Naive thymus-derived CD4-positive, alpha-beta T cell (primary cell): ENCODE measurements at regions of chr22 and their contacts with region 1.

Region 1: GRCh38 chr22:27903805-27904473 is 15.1 kb downstream of the PITPNB start:
- DNase-seq: no peak
- ATAC-seq: peak; percentile 63
- H3K4me3 ChIP-seq: no peak overlapping the region
- H3K4me3 Mint-ChIP-seq: peak overlapping the region in 3 of 10 donors; percentile 14 to 59 (median 17)
- H3K27ac ChIP-seq: no peak overlapping the region
- H3K27ac Mint-ChIP-seq: peak overlapping the region in 6 of 9 donors; percentile 0 to 63 (median 57)
- H3K4me1 ChIP-seq: no peaks in the 10 kb centered on the region
- H3K4me1 Mint-ChIP-seq: peaks cover 23 to 62% (median 45%) of the 10 kb centered on the region in 7 donors
- H3K27me3 ChIP-seq: no peaks in the 10 kb centered on the region
- H3K27me3 Mint-ChIP-seq: no peaks in the 10 kb centered on the region

Region 2: DNA sequence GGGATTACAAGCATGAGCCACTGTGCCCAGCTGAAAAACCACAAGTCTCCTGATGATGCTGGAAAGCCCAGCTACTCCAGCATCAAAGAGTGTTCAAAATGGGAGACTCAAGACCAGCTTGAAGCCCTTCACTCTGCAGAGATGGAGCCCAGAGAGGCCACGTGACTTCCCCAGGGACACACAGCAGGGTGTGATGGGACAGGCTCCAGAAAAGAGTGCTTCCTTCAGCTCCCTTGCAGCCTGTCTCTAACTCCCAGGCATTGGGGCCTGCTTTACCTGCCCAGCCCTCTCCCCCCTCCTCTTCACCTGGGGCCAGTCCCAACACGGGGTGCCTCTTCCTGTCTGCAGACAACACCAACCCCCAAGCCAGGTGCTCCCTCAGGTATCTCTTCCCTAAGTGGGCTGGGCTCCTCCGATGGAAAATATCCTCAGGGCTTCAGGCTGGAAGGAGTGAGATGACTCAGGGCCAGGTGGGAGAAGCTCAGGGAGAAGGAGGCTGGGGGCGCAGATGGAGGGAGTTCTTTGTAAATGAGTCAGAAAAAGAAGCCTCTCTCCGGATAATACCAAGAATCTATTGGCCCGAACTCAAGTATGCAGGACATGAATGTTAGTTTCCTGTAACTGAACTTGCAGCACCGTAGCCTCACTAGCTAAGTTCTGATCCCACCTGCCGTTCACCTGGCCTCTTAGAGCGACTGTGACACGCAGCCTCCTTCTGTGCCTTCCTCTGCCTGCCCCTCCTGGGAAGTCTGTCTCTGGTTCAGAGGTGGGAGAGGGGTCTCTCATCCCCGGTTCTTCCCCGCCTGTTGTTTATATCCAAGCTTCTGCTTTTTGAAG is 429.0 kb before region 1 on chr22:
- CTCF ChIA-PET with region 1: no interaction called
- POLR2A ChIA-PET with region 1: no interaction called
- intact Hi-C with region 1: no loop called
- DNase-seq: no peak
- ATAC-seq: no peak
- H3K4me3 ChIP-seq: no peak overlapping the region
- H3K4me3 Mint-ChIP-seq: no peak overlapping the region
- H3K27ac ChIP-seq: no peak overlapping the region
- H3K27ac Mint-ChIP-seq: no peak overlapping the region
- H3K4me1 ChIP-seq: no peaks in the 10 kb centered on the region
- H3K4me1 Mint-ChIP-seq: no peaks in the 10 kb centered on the region
- H3K27me3 ChIP-seq: no peaks in the 10 kb centered on the region
- H3K27me3 Mint-ChIP-seq: no peaks in the 10 kb centered on the region

Region 3: DNA sequence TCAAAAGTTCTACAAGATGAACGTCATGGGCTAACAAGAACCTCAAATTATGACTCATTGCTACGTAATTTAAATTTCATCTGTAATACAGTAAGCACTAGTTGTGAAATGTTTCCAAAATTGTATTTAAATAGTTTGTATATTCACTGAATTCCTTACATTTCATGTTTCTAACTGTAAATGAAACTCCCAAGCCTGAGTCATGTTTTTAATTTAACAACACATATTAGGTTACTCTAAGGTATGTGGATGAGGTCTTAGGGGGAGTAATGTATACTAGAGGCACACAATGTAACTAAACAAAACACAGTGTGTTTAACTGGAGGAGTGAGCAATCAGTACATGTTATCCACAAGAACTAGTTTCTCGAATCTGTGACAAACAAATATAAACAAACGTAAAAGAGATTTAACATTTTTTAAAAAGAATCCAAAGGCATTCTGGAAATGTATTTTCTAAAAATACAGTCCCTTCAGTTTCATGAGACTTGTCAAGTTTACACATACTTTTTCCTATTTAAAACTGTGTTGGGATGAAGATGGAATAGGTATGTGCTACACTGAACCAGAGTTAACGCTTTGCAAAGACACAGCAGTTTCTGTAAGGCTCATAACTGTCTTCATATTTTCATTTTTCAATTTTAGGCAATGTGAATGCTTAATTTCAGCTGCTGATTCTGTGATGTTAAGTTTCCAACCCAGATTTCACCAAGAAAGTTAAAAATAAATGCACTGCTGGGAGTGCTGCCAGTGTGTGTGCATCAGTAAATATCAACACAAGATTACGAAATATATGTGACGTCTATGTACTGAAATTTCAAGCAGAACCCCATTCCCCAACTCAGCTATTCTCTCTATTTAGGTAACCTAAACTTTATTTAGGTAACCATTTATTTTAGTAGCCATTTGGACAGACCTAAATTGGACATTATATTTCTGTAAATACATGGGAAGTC is 37.5 kb before region 1 on chr22:
- CTCF ChIA-PET with region 1: no interaction called
- POLR2A ChIA-PET with region 1: no interaction called
- intact Hi-C with region 1: loop called in 1 of 2 experiments (anchors 1 kb)
- DNase-seq: no peak
- ATAC-seq: no peak
- H3K4me3 ChIP-seq: no peak overlapping the region
- H3K4me3 Mint-ChIP-seq: no peak overlapping the region
- H3K27ac ChIP-seq: no peak overlapping the region
- H3K27ac Mint-ChIP-seq: peak overlapping the region in 1 of 9 donors; percentile 36
- H3K4me1 ChIP-seq: no peaks in the 10 kb centered on the region
- H3K4me1 Mint-ChIP-seq: peaks cover 14 to 51% (median 33%) of the 10 kb centered on the region in 7 donors
- H3K27me3 ChIP-seq: no peaks in the 10 kb centered on the region
- H3K27me3 Mint-ChIP-seq: no peaks in the 10 kb centered on the region